Activated CD8-positive, alpha-beta T cell treated with anti-CD3 and anti-CD28 coated beads for 36 hours (primary cell): ENCODE measurements at regions of chr19 and their contacts with region 1.

Region 1: GRCh38 chr19:1825909-1826556 is 14.0 kb upstream of the ATP8B3 start:
- DNase-seq: peak; percentile 83
- ATAC-seq: peak; percentile 93
- H3K4me3 Mint-ChIP-seq: no peak overlapping the region
- H3K27ac Mint-ChIP-seq: no peak overlapping the region
- H3K4me1 Mint-ChIP-seq: peaks cover 5% of the 10 kb centered on the region
- H3K27me3 Mint-ChIP-seq: no peaks in the 10 kb centered on the region
- CTCF ChIP-seq: peak; percentile 83

Region 2: DNA sequence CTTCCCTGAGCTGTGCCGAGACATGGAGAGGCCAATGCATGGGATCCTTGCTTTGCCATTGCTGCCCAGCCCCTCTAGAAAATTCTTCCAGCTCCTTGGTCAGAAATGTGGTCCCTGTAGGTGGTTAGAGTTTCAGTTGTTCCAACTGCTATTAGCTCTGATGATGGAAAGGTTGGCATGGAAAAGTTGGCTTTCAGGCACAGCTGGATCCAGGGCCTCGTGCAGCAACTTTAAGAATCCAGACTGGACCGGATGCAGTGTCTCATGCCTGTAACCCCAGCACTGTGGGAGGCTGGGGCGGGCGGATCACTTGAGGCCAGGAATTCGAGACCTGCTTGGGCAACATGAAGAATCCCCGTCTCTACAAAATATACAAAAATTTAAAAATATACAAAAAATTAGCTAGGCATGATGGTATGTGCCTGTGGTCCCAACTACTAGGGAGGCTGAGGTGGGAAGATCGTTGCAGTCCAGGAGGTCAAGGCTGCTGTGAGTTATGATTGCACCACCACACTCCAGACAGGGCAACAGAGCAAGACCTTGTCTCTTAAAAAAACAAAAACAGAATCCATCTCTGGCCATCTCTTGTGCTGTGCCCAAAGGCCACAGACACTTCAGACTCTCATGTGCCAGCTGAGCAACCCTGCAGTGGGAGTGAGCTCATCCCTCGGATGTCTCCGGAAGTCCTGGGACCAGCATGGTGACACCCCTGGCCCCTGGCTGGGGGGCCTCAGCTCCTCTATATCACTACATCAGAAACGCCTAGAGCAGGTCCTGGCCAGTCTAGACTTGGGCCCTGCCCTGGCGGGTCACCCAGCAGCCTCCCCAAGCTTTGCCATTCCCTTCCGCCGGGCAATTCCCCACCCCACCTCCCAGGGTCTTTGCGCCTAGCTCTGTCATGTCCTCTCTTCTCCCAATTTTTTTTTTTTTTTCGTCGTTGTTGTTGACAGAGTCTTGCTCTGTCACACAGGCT is 274.7 kb before region 1 on chr19:
- CTCF ChIA-PET with region 1: interaction called, 17 read pairs
- POLR2A ChIA-PET with region 1: interaction called, 3 read pairs
- intact Hi-C with region 1: no loop called
- DNase-seq: no peak
- ATAC-seq: no peak
- H3K4me3 Mint-ChIP-seq: no peak overlapping the region
- H3K27ac Mint-ChIP-seq: no peak overlapping the region
- H3K4me1 Mint-ChIP-seq: no peaks in the 10 kb centered on the region
- H3K27me3 Mint-ChIP-seq: peaks cover 6% of the 10 kb centered on the region
- CTCF ChIP-seq: no peak

Region 3: GRCh38 chr19:1789261-1790041 is 36.6 kb before region 1 on chr19:
- CTCF ChIA-PET with region 1: interaction called, 12 read pairs
- POLR2A ChIA-PET with region 1: interaction called, 4 read pairs
- intact Hi-C with region 1: no loop called
- DNase-seq: no peak
- ATAC-seq: no peak
- H3K4me3 Mint-ChIP-seq: no peak overlapping the region
- H3K27ac Mint-ChIP-seq: no peak overlapping the region
- H3K4me1 Mint-ChIP-seq: peaks cover 4% of the 10 kb centered on the region
- H3K27me3 Mint-ChIP-seq: peaks cover 11% of the 10 kb centered on the region
- CTCF ChIP-seq: no peak

Region 4: DNA sequence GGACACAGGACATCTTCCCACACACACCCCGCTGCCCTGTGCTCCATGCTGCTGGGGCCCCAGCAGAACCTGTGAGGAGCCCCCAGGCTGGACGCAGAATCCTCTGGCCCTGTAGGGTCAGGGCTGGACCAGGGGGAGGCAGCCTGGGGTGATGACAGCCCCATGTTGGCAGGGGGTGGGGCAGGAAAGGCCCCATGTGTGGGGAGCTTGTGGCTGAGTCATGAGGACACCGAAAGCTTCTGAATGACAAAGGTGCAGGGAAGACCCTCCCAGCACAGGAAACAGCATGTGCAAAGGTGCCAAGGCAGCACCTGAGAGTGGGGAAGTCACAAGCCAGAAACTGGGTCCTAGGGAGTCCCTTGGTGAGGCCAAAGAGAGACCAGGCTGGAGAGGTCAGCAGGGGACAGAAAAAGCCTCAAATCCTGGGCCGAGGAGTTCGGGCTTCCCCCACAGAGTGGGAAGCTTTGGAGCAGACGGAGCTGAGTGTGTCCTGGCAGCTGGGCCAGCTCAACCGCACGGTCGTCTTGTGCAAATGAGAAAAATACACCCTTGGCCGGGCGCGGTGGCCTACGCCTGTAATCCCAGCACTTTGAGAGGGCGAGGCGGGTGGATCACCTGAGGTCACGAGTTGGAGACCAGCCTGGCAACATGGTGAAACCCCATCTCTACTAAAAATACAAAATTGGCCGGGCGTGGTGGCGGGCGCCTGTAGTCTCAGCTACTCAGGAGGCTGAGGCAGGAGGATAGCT is 31.4 kb before region 1 on chr19:
- CTCF ChIA-PET with region 1: interaction called, 12 read pairs
- POLR2A ChIA-PET with region 1: interaction called, 4 read pairs
- intact Hi-C with region 1: no loop called
- DNase-seq: peak; percentile 43
- ATAC-seq: peak; percentile 34
- H3K4me3 Mint-ChIP-seq: no peak overlapping the region
- H3K27ac Mint-ChIP-seq: no peak overlapping the region
- H3K4me1 Mint-ChIP-seq: peaks cover 8% of the 10 kb centered on the region
- H3K27me3 Mint-ChIP-seq: peaks cover 6% of the 10 kb centered on the region
- CTCF ChIP-seq: no peak

Region 5: GRCh38 chr19:1837625-1838105 is 11.6 kb after region 1 on chr19:
- CTCF ChIA-PET with region 1: interaction called, 57 read pairs
- POLR2A ChIA-PET with region 1: interaction called, 4 read pairs
- intact Hi-C with region 1: no loop called
- DNase-seq: peak; percentile 71
- ATAC-seq: peak; percentile 95
- H3K4me3 Mint-ChIP-seq: no peak overlapping the region
- H3K27ac Mint-ChIP-seq: no peak overlapping the region
- H3K4me1 Mint-ChIP-seq: peaks cover 26% of the 10 kb centered on the region
- H3K27me3 Mint-ChIP-seq: no peaks in the 10 kb centered on the region
- CTCF ChIP-seq: peak; percentile 94

Region 6: GRCh38 chr19:1905071-1905862 is 79.2 kb after region 1 on chr19 and contains the starts of genes ADAT3 and SCAMP4:
- CTCF ChIA-PET with region 1: no interaction called
- POLR2A ChIA-PET with region 1: no interaction called
- intact Hi-C with region 1: no loop called
- DNase-seq: peak; percentile 99
- ATAC-seq: peak; percentile 98
- H3K4me3 Mint-ChIP-seq: peak within 1 kb of the TSS; percentile 87
- H3K27ac Mint-ChIP-seq: peak within 1 kb of the TSS; percentile 90
- H3K4me1 Mint-ChIP-seq: peaks cover 50% of the 10 kb centered on the region
- H3K27me3 Mint-ChIP-seq: no peaks in the 10 kb centered on the region
- CTCF ChIP-seq: no peak
- total RNA-seq, gene ADAT3: 5.3 to 6.7 TPM
- total RNA-seq, gene SCAMP4: 23.1 to 25.1 TPM

Region 7: DNA sequence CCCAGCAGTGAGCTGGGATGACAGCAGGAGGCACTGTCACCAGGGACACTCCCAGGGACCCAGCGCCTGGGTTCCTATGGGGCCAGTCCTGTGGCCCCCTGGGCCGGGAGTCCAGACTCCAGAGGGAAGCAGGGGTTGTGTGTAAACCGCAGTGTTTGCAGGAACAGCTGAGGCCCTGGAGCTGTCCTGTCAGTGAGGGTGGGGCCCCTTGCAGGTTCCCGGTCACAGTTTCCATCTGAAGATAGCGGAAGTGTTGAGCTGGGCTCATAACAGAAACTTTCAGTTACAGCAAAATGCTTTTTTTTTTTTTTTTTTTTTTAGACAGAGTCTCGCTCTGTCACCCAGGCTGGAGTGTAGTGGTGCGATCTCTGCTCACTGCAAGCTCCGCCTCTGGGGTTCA is 97.3 kb after region 1 on chr19:
- CTCF ChIA-PET with region 1: no interaction called
- POLR2A ChIA-PET with region 1: no interaction called
- intact Hi-C with region 1: no loop called
- DNase-seq: peak; percentile 57
- ATAC-seq: peak; percentile 59
- H3K4me3 Mint-ChIP-seq: no peak overlapping the region
- H3K27ac Mint-ChIP-seq: no peak overlapping the region
- H3K4me1 Mint-ChIP-seq: peaks cover 11% of the 10 kb centered on the region
- H3K27me3 Mint-ChIP-seq: no peaks in the 10 kb centered on the region
- CTCF ChIP-seq: no peak